ENCODE measurements at regions of chr3 and their contacts with region 1.

Region 1: GRCh38 chr3:56556908-56557830 is at the start of gene CCDC66:
- DNase-seq: peak; percentile 90
- H3K4me3 Mint-ChIP-seq: peak within 1 kb of the TSS; percentile 97
- H3K27ac Mint-ChIP-seq: peak within 1 kb of the TSS; percentile 99
- H3K4me1 Mint-ChIP-seq: peaks cover 38% of the 10 kb centered on the region
- H3K27me3 Mint-ChIP-seq: peaks cover 23% of the 10 kb centered on the region
- total RNA-seq, gene CCDC66: 37.7 and 40.4 TPM in 2 replicates

Region 2: GRCh38 chr3:56610669-56611335 is 53.6 kb after region 1 on chr3:
- intact Hi-C with region 1: loop called (anchors 2 kb)
- DNase-seq: no peak
- H3K4me3 Mint-ChIP-seq: no peak overlapping the region
- H3K27ac Mint-ChIP-seq: peak overlapping the region; percentile 14
- H3K4me1 Mint-ChIP-seq: peaks cover 62% of the 10 kb centered on the region
- H3K27me3 Mint-ChIP-seq: no peaks in the 10 kb centered on the region

Region 3: DNA sequence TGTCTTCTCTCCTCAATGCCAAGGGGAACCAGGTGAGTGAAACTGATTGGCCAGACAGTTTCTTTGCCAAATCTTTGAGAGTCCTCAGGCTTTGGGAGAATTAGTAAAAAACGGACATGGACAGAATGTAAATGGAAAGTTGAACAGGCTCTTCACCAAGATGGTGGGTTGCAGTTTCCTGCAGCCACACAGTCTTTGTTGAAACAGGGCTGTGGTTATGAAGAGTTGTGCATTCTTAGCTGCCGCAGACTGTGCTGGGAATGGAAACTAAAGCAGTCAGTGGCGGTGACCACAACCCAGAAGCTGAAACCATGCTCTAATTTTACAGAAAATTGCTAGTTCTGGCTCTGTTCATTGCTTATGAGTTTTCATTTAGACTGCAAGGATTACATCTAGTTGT is 168.0 kb after region 1 on chr3:
- intact Hi-C with region 1: loop called (anchors 1 kb)
- DNase-seq: peak; percentile 68
- H3K4me3 Mint-ChIP-seq: peak overlapping the region; percentile 81
- H3K27ac Mint-ChIP-seq: peak overlapping the region; percentile 93
- H3K4me1 Mint-ChIP-seq: peaks cover 69% of the 10 kb centered on the region
- H3K27me3 Mint-ChIP-seq: no peaks in the 10 kb centered on the region

Region 4: DNA sequence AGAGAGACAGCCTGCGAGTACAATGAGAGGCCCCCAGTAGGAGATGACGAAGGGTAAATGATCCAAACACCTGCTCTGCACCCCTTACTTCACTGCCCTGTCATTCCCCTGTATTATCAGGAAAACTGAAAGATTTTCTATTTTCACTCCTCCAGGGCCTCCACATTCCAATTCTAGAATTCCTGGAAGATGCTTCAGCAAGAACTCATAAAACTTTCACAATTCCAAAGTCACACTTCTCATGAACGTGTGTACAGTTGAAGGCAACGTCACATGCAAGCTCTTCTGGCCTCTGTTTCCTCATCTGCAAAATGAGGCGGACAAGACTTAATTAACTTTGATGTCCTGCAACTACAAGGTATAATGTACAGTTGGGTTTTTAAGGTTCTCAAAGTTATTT is 440.5 kb after region 1 on chr3:
- intact Hi-C with region 1: loop called (anchors 2 kb)
- DNase-seq: no peak
- H3K4me3 Mint-ChIP-seq: no peak overlapping the region
- H3K27ac Mint-ChIP-seq: no peak overlapping the region
- H3K4me1 Mint-ChIP-seq: peaks cover 5% of the 10 kb centered on the region
- H3K27me3 Mint-ChIP-seq: peaks cover 3% of the 10 kb centered on the region

Measured in activated T-helper 1 cell treated with anti-CD3 and anti-CD28 coated beads, Interleukin-12 subunit alpha, Interleukin-12 subunit beta, Interleukin-2, Interleukin-4 antibody, amounts not matched to agents 30 ng/mL and 10 ng/mL and 1 ng/mL, durations not matched to agents 14 hours and 24 hours and 36 hours (primary cell).